Activated CD4-positive, alpha-beta T cell treated with anti-CD3 and anti-CD28 coated beads for 36 hours (primary cell): ENCODE measurements at regions of chr4 and their contacts with region 1.

Region 1: DNA sequence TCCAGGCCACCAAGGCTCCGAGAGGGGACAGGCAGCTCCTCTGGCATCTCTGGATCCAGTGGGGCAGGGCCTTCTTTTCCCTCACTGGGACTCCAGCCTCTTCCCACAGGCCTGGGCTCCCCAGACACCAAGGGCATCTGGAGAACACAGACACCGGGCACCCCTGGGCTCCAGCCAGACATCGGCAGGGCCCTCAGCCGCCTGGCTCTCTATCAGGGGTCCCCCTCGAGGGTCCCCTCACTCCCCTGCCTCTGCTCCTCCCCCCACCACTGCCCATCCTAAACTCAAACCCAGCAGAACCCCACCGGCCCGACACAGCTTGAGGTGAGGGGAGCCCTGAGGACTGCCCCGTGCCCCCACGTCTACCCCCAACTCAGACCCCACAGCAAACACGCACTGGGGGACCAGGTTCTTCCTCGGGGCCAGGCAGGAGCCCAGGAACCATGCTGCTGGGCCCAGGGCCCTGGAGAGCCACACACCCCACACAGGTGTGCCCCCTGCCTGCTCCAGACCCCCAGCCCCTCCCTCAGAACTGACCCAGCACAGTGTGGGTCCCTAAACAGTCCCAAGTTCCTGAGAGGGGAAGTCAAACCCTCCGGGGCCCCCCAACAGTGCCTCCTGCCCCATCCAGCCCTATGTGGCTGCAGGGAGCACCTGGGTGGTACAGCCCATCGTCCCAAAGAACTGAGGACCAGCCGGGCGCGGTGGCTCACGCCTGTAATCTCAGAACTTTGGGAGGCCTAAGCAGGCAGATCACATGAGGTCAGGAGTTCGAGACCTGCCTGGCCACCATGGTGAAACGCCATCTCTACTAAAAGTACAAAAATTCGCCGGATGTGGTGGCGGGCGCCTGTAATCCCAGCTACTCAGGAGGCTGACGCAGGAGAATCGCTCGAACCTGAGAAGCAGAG is 86.8 kb downstream of the FAM53A start:
- DNase-seq: no peak
- ATAC-seq: no peak
- H3K4me3 Mint-ChIP-seq: no peak overlapping the region
- H3K27ac Mint-ChIP-seq: no peak overlapping the region
- H3K4me1 Mint-ChIP-seq: no peaks in the 10 kb centered on the region
- H3K27me3 Mint-ChIP-seq: peaks cover 2% of the 10 kb centered on the region

Region 2: DNA sequence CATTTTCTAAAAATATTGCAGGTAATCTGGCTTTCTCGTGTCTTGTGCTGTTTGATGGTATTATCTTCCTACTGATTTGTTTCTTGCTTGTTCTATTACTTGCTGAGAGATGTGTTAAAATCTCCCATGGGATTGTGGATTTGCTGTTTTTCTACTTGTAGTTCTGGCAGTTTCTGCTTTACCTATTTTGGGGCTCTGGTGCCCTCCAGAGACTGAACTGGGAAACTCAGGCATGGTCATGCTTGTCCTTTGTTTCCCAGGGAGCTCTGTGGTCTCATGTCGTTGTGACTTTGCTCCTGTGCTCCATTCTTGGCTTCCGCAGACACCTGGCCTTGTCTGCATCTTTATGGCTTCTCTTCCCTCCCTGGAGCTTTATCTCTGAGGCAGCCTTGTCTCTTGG is 313.4 kb after region 1 on chr4:
- CTCF ChIA-PET with region 1: no interaction called
- POLR2A ChIA-PET with region 1: interaction called, 13 read pairs
- intact Hi-C with region 1: no loop called
- DNase-seq: peak; percentile 41
- ATAC-seq: no peak
- H3K4me3 Mint-ChIP-seq: no peak overlapping the region
- H3K27ac Mint-ChIP-seq: no peak overlapping the region
- H3K4me1 Mint-ChIP-seq: peaks cover 8% of the 10 kb centered on the region
- H3K27me3 Mint-ChIP-seq: no peaks in the 10 kb centered on the region